Activated naive CD4-positive, alpha-beta T cell treated with anti-CD3 and anti-CD28 coated beads, Interleukin-2, amount 10 ng/mL, durations not matched to agents 7 days and 5 days (primary cell): ENCODE measurements at regions of chrX and their contacts with region 1.

Region 1: DNA sequence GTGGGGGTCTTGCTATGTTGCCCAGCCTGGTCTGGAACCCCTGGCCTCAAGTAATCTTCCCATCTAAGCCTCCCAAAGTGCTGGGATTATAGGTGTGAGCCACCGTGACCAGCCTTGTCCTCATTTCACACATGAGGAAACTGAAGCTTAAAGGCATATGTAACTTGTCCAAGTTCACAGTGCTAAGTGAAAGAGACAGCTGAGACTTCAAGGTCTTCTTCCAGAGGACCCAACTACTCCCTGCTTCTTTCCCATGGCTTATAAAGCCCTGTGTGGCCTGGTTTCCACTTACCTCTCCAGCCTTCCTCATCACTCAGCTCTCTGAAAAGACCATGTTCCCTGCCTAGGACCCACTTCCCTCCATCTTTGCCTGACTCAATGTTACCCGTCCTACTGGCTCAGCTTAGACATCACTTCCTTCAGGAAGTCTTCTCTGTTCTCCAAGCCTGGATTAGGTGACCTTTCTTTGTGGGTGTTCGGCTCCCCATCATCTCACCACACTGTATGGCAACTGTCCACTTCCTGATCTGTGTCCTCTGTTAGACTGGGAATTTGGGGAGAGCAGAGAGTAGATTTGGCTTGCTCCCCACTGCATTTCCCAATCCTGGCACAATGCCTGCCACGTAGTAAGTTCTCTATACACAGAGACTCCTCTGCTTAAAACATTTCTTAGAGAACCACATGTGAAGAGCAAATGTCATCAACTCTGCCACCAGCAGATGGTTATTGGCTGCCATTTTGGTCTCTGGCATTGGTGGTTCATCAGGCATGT is 30.4 kb upstream of the LAMP2 start:
- DNase-seq: no peak
- H3K4me3 Mint-ChIP-seq: no peak overlapping the region
- H3K27ac Mint-ChIP-seq: no peak overlapping the region
- H3K4me1 Mint-ChIP-seq: peaks cover 7% of the 10 kb centered on the region
- H3K27me3 Mint-ChIP-seq: no peaks in the 10 kb centered on the region

Region 2: DNA sequence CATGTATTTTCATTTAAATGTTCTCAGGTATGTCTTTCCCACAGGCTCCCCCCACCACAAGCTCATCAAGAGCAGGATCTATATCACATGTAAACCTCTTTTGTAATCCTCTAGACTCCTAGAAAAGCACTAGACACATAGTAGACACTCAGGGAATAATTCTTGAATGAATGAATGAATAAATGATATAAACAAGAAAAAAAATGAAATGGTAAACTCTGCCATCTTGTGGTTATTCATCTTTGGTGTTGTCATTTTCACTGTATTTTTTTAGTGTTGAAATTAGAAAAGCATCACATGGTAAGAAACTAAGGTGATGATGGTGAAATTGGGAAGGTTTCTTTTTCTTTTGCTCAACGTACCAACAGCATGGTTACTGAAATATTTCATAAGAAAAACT is 164.6 kb after region 1 on chrX:
- CTCF ChIA-PET with region 1: interaction called, 13 read pairs
- DNase-seq: no peak
- H3K4me3 Mint-ChIP-seq: no peak overlapping the region
- H3K27ac Mint-ChIP-seq: no peak overlapping the region
- H3K4me1 Mint-ChIP-seq: no peaks in the 10 kb centered on the region
- H3K27me3 Mint-ChIP-seq: no peaks in the 10 kb centered on the region

Region 3: DNA sequence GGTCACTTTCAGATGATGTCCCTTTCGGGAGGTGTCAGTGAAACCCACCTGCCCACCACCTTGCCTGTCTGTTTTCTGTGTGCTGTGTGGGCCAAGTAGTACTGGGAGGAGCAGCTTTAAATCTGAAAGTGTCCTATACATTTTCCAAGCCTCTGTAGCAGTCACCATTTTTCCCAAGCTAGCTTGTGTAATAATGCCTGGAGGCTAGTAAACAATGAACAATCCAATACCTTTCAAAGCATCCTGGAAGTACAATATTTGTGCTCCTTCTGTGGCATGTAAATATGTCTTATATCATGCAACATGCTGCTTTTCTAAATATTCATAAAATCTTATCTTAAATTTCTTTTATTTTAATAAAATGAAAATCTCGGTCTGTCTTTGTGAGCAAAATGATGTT is 242.0 kb after region 1 on chrX:
- CTCF ChIA-PET with region 1: no interaction called
- DNase-seq: no peak
- H3K4me3 Mint-ChIP-seq: no peak overlapping the region
- H3K27ac Mint-ChIP-seq: no peak overlapping the region
- H3K4me1 Mint-ChIP-seq: no peaks in the 10 kb centered on the region
- H3K27me3 Mint-ChIP-seq: no peaks in the 10 kb centered on the region